ENCODE measurements at regions of chr12 and their contacts with region 1.

Region 1: GRCh38 chr12:92145731-92146496 is at the start of gene BTG1:
- DNase-seq: peak; percentile 100
- H3K4me3 ChIP-seq: peak within 1 kb of the TSS; percentile 83 to 100 (median 88)
- H3K27ac ChIP-seq: peak within 1 kb of the TSS; percentile 92
- H3K4me1 ChIP-seq: peaks cover 8% of the 10 kb centered on the region
- H3K27me3 ChIP-seq: no peaks in the 10 kb centered on the region
- CTCF ChIP-seq: no peak
- total RNA-seq, gene BTG1: 26.8 to 68.2 TPM

Region 2: DNA sequence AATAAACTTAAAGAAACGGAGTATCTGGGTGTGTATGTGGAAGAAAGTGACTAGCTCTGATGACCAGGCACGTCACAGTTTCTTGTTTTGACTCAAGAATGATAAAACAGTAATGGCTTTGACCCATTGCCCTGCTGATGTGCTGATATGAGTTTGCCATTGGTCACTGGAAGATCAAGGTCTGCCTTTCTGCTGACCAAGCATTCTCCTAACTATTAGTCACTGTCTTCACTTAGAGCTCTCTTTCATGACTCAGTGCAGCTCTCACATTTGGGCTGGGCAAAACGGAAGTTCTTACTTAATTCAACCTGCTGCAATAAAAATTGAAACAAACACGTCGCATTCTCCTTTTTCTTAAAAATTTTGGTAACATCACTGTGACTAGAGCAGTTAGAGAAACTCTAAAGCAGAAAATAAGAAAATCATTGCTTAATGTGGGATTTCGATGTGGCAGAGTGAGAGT is 366.9 kb before region 1 on chr12:
- CTCF ChIA-PET with region 1: no interaction called
- dilution Hi-C with region 1: no loop called
- in situ Hi-C with region 1: loop called in 1 of 2 experiments (anchors 25 kb)
- intact Hi-C with region 1: loop called (anchors 10 kb)
- DNase-seq: peak; percentile 99
- H3K4me3 ChIP-seq: no peak overlapping the region
- H3K27ac ChIP-seq: peak overlapping the region; percentile 100
- H3K4me1 ChIP-seq: peaks cover 29% of the 10 kb centered on the region
- H3K27me3 ChIP-seq: no peaks in the 10 kb centered on the region
- CTCF ChIP-seq: no peak

Region 3: DNA sequence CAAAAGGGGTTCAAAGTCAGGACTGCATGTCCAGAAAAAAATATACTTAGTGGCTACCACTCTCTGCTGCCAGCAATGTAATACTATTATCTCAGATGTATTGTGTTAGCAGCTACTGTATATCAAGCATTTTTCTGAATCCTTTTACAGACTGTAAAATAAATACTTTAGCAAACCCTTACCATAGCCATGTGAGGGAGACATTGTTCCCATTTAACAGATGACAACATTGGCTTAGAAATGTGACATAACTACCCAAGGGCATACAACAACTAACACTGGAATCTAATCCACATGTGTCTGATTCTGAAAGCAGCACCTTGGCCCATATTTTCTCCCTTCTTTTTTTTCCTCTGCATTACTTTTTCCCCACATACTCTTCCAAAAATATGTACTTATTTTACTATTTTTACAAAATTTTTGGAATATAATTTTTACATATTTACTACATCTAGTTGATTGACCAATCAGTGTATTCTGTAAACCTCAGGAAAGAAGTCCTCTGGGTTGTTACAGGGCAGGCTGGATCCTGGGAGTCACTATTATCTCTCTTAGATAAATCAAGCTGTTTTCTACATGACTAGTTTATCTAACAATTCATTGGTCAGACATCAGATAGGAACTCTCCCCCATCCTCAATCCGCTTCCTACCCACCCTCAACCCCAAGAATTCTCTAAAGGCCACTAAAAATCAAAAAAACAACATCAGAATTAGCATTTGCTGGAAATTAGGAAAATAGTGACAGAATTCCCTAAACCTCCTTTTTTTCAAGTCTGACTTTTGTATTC is 154.3 kb before region 1 on chr12:
- CTCF ChIA-PET with region 1: no interaction called
- dilution Hi-C with region 1: no loop called
- in situ Hi-C with region 1: no loop called
- intact Hi-C with region 1: loop called (anchors 2 kb)
- DNase-seq: peak; percentile 14
- H3K4me3 ChIP-seq: no peak overlapping the region
- H3K27ac ChIP-seq: no peak overlapping the region
- H3K4me1 ChIP-seq: peaks cover 4% of the 10 kb centered on the region
- H3K27me3 ChIP-seq: no peaks in the 10 kb centered on the region
- CTCF ChIP-seq: no peak

Region 4: GRCh38 chr12:92341065-92341668 is 195.3 kb after region 1 on chr12:
- CTCF ChIA-PET with region 1: no interaction called
- dilution Hi-C with region 1: no loop called
- in situ Hi-C with region 1: no loop called
- intact Hi-C with region 1: loop called (anchors 10 kb)
- DNase-seq: peak; percentile 84
- H3K4me3 ChIP-seq: peak overlapping the region in 2 of 3 experiments; percentile 36 to 46
- H3K27ac ChIP-seq: peak overlapping the region; percentile 69
- H3K4me1 ChIP-seq: peaks cover 14% of the 10 kb centered on the region
- H3K27me3 ChIP-seq: no peaks in the 10 kb centered on the region
- CTCF ChIP-seq: no peak

Region 5: GRCh38 chr12:92570056-92570753 is 424.3 kb after region 1 on chr12:
- CTCF ChIA-PET with region 1: interaction called, 3 read pairs
- dilution Hi-C with region 1: no loop called
- in situ Hi-C with region 1: loop called in 1 of 2 experiments (anchors 10 kb)
- intact Hi-C with region 1: loop called (anchors 1 kb)
- DNase-seq: peak; percentile 80
- H3K4me3 ChIP-seq: no peak overlapping the region
- H3K27ac ChIP-seq: no peak overlapping the region
- H3K4me1 ChIP-seq: peaks cover 27% of the 10 kb centered on the region
- H3K27me3 ChIP-seq: no peaks in the 10 kb centered on the region
- CTCF ChIP-seq: peak; percentile 51 to 69

Region 6: DNA sequence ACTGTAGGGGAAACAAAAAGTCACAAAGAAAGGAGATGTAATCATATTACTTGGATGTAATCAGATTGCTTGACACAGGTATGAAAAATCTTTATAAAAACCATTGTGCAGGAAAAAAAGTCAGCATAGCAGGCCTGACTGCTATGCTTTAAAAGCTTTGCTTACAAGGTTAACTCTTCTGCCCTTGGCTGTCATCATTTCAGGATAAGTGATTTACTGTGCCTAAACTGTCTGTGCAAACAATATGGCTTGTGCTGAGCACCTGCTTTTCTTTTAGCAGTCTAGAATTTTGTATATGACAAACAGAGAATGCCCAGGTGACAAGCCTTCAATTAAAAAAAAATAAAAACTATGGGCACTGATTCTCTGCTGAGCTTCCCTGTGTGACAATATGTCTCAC is 493.1 kb after region 1 on chr12:
- CTCF ChIA-PET with region 1: no interaction called
- dilution Hi-C with region 1: no loop called
- in situ Hi-C with region 1: no loop called
- intact Hi-C with region 1: no loop called
- DNase-seq: no peak
- H3K4me3 ChIP-seq: no peak overlapping the region
- H3K27ac ChIP-seq: no peak overlapping the region
- H3K4me1 ChIP-seq: no peaks in the 10 kb centered on the region
- H3K27me3 ChIP-seq: no peaks in the 10 kb centered on the region
- CTCF ChIP-seq: no peak

Measured in mammary epithelial cell (primary cell).